HEK293 (cell line): ENCODE measurements at regions of chr5 and their contacts with region 1.

Region 1: GRCh38 chr5:17189381-17190036 is 27.9 kb upstream of the BASP1 start:
- H3K4me3 ChIP-seq: no peak overlapping the region
- H3K27ac ChIP-seq: no peak overlapping the region
- H3K4me1 ChIP-seq: 0 out of 2 replicates have a peak, but pooled peaks cover 5% of the 10 kb centered on the region
- CTCF ChIP-seq: peak; percentile 76

Region 2: DNA sequence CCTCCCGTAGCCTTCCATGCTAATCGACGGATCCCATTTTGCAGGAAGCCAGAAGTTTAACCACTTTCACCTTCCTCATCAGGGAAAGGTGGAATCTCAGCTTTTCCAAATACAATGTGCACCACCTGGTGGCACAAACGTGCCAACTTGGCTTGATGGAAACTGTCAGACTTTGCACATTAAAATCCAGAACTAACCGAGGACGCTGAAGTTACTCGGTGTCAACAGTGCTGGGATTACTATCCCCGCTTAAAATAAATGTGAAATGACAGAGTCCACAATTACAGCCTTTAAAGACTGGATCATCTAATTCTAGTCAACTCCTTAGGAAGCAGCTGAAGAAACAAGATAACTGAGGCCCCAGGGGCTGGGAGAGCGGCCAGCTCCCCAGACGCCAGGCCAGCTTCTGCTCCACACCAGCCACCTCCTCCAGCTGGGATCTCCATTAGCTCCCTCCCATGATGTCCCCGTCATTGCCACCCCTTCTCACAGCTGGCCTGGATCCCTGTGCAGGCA is 522.6 kb before region 1 on chr5:
- CTCF ChIA-PET with region 1: interaction called, 20 read pairs
- POLR2A ChIA-PET with region 1: no interaction called
- H3K4me3 ChIP-seq: no peak overlapping the region
- H3K27ac ChIP-seq: no peak overlapping the region
- H3K4me1 ChIP-seq: no peaks in the 10 kb centered on the region
- CTCF ChIP-seq: peak; percentile 60; the same call in 1 of the 2 replicates

Region 3: DNA sequence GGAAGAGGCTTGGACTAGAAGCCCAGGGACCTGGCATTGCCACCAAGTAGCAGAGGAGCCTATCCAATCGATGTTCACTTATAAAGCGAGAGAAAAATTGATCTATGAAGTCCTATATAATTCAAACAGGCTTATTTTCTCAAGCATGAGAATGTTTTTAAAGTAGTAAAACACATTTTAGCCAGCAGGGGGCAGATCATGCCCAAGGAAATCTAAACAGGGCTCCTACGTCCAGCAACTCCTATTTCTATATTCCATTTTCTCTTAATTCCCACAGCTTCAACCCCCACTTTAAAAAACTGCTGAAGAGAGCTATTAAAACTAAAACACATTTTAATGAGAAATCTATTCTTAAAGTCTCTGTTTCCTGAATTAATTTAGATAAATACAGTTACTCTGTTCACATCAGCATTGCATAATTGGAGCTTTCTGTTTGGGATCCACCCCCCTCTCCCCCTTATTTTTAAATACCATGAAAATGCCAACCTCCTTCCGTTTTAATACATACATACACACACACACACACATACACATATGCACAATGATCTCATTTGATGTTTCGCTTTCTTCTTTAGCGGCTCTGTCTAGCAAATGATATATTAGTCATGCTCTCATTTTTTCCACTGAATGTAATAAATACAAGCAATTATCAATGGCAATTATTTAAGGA is 398.3 kb before region 1 on chr5:
- CTCF ChIA-PET with region 1: interaction called, 94 read pairs
- POLR2A ChIA-PET with region 1: no interaction called
- H3K4me3 ChIP-seq: no peak overlapping the region
- H3K27ac ChIP-seq: no peak overlapping the region
- H3K4me1 ChIP-seq: peaks cover 8% of the 10 kb centered on the region; the same call in 1 of the 2 replicates
- CTCF ChIP-seq: no peak

Region 4: DNA sequence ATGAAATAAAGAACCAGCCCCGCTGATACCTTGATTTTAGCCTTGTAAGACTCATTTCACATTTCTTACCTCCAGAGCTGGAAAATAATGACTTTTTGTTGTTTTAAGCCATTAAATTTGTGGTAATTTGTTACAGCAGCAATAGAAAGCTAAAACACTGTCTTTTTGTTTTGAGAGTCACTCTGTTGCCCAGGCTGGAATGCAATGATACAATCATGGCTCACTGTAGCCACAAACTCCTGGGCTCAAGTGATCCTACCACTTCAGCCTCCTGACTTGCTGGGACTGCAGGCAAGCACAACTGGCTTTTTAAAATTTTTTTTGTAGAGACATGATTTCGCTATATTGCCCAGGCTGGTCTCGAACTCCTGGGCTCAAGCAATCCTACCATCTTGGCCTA is 218.7 kb before region 1 on chr5:
- CTCF ChIA-PET with region 1: interaction called, 11 read pairs
- POLR2A ChIA-PET with region 1: no interaction called
- H3K4me3 ChIP-seq: no peak overlapping the region
- H3K27ac ChIP-seq: no peak overlapping the region
- H3K4me1 ChIP-seq: no peaks in the 10 kb centered on the region
- CTCF ChIP-seq: no peak

Region 5: GRCh38 chr5:17094830-17095229 is 94.7 kb before region 1 on chr5:
- CTCF ChIA-PET with region 1: interaction called, 11 read pairs
- POLR2A ChIA-PET with region 1: no interaction called
- H3K4me3 ChIP-seq: no peak overlapping the region
- H3K27ac ChIP-seq: no peak overlapping the region
- H3K4me1 ChIP-seq: peaks cover 4% of the 10 kb centered on the region
- CTCF ChIP-seq: no peak

Region 6: GRCh38 chr5:17169507-17169906 is 20.0 kb before region 1 on chr5:
- CTCF ChIA-PET with region 1: interaction called, 25 read pairs
- POLR2A ChIA-PET with region 1: no interaction called
- H3K4me3 ChIP-seq: no peak overlapping the region
- H3K27ac ChIP-seq: no peak overlapping the region
- H3K4me1 ChIP-seq: peaks cover 3% of the 10 kb centered on the region; the same call in 1 of the 2 replicates
- CTCF ChIP-seq: no peak

Region 7: GRCh38 chr5:17381932-17382331 is 192.4 kb after region 1 on chr5:
- CTCF ChIA-PET with region 1: no interaction called
- POLR2A ChIA-PET with region 1: no interaction called
- H3K4me3 ChIP-seq: no peak overlapping the region
- H3K27ac ChIP-seq: no peak overlapping the region
- H3K4me1 ChIP-seq: peaks cover 32% of the 10 kb centered on the region
- CTCF ChIP-seq: no peak